Activated B cell treated with CpG ODN at 0.5 μM for 24 hours (primary cell): ENCODE measurements at regions of chr2 and their contacts with region 1.

Region 1: GRCh38 chr2:85648619-85649018 is 19.4 kb downstream of the SFTPB start:
- DNase-seq: no peak
- ATAC-seq: peak; percentile 33
- H3K4me3 Mint-ChIP-seq: no peak overlapping the region
- H3K27ac Mint-ChIP-seq: no peak overlapping the region
- H3K4me1 Mint-ChIP-seq: peaks cover 24% of the 10 kb centered on the region
- H3K27me3 Mint-ChIP-seq: no peaks in the 10 kb centered on the region
- CTCF ChIP-seq: no peak

Region 2: DNA sequence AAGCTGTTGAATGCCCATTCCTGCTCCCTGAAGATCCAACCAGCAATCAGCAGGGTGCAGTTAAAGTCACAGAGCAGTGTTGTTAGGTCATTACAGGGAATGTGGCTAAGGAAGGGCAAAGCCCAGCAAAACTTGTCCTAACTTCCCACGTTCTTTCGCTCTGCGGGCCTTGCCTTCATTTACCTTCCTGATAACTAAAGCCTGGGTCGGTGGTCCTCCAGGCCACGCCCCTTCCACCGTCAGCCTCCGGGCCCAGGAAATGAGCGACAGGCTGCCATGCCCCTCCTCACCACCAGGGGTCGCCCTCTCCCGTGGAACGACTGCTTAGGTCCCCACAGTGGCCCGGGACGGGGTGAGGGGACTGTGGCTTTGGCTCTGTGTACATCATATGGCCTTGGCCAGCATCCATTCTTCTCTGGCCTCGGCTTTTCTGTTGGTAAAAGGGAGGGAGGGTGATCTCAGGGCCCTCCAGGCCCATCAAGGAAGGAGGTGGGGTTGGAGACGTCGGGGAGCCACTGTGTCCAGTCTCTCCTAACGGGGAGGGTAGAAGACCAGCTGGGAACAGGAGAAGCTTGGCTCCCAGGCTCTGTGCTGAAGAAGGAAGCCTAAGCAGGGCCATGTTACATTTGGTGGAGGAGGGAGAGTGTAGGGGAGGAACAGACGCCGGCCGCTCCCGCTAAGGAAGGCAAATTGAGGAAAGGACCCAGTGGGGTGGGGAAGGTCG is 227.9 kb before region 1 on chr2:
- CTCF ChIA-PET with region 1: no interaction called
- POLR2A ChIA-PET with region 1: no interaction called
- intact Hi-C with region 1: no loop called
- DNase-seq: peak; percentile 95
- ATAC-seq: peak; percentile 76
- H3K4me3 Mint-ChIP-seq: peak overlapping the region; percentile 78
- H3K27ac Mint-ChIP-seq: peak overlapping the region; percentile 80
- H3K4me1 Mint-ChIP-seq: peaks cover 25% of the 10 kb centered on the region
- H3K27me3 Mint-ChIP-seq: no peaks in the 10 kb centered on the region
- CTCF ChIP-seq: peak; percentile 90

Region 3: GRCh38 chr2:85584857-85585783 is 63.5 kb before region 1 on chr2:
- CTCF ChIA-PET with region 1: no interaction called
- POLR2A ChIA-PET with region 1: no interaction called
- intact Hi-C with region 1: loop called (anchors 1 kb)
- DNase-seq: no peak
- ATAC-seq: peak; percentile 43
- H3K4me3 Mint-ChIP-seq: peak overlapping the region; percentile 82
- H3K27ac Mint-ChIP-seq: peak overlapping the region; percentile 63
- H3K4me1 Mint-ChIP-seq: peaks cover 46% of the 10 kb centered on the region
- H3K27me3 Mint-ChIP-seq: no peaks in the 10 kb centered on the region
- CTCF ChIP-seq: no peak

Region 4: GRCh38 chr2:85628658-85629057 is 20.0 kb before region 1 on chr2:
- CTCF ChIA-PET with region 1: interaction called, 3 read pairs
- POLR2A ChIA-PET with region 1: interaction called, 10 read pairs
- intact Hi-C with region 1: no loop called
- DNase-seq: no peak
- ATAC-seq: peak; percentile 65
- H3K4me3 Mint-ChIP-seq: no peak overlapping the region
- H3K27ac Mint-ChIP-seq: peak overlapping the region; percentile 41
- H3K4me1 Mint-ChIP-seq: peaks cover 12% of the 10 kb centered on the region
- H3K27me3 Mint-ChIP-seq: no peaks in the 10 kb centered on the region
- CTCF ChIP-seq: no peak

Region 5: GRCh38 chr2:85669549-85669948 is 20.9 kb after region 1 on chr2:
- CTCF ChIA-PET with region 1: no interaction called
- POLR2A ChIA-PET with region 1: no interaction called
- intact Hi-C with region 1: loop called (anchors 1 kb)
- DNase-seq: no peak
- ATAC-seq: peak; percentile 78
- H3K4me3 Mint-ChIP-seq: no peak overlapping the region
- H3K27ac Mint-ChIP-seq: no peak overlapping the region
- H3K4me1 Mint-ChIP-seq: peaks cover 12% of the 10 kb centered on the region
- H3K27me3 Mint-ChIP-seq: no peaks in the 10 kb centered on the region
- CTCF ChIP-seq: no peak